ENCODE measurements at regions of chr6 and their contacts with region 1.

Region 1: DNA sequence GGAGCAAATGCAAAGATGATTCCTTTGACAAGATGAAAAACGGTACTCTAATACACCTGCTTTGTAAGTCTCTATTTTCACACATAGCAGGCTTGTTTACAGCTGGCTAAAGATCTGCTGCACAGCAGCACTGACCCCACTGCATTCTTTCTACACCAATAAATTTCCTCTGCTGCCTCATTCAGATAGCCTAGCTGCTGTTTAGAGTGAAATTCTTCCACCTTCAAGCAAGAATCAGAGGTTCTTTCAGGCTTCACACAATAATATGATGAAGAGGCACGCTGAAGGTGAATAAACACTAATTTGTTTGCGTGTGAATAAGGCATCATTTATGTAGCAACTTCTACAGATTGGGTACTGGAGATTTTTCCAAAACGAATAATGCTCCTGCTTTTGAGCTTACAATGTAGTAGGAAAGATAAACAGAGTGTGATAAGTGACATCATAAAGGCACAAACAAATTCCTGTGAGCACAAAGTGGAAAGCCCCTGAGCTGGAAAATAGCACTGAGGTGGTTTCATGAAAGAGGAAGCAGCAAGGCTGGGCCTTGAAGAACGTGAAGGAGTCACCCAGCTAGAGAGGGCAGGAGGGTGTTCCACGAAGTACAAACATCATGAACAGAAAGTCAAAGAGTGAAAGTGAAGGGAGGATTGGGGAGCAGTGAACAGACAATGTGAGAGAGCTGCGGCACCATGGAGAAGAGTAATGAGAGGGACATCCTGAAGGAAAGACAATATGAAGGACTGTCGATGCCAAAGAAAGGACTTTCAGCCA is 543.4 kb downstream of the CD83 start:
- DNase-seq: peak; percentile 91
- H3K4me3 Mint-ChIP-seq: no peak overlapping the region
- H3K27ac Mint-ChIP-seq: no peak overlapping the region
- H3K4me1 Mint-ChIP-seq: peaks cover 46% of the 10 kb centered on the region
- H3K27me3 Mint-ChIP-seq: peaks cover 7% of the 10 kb centered on the region

Region 2: DNA sequence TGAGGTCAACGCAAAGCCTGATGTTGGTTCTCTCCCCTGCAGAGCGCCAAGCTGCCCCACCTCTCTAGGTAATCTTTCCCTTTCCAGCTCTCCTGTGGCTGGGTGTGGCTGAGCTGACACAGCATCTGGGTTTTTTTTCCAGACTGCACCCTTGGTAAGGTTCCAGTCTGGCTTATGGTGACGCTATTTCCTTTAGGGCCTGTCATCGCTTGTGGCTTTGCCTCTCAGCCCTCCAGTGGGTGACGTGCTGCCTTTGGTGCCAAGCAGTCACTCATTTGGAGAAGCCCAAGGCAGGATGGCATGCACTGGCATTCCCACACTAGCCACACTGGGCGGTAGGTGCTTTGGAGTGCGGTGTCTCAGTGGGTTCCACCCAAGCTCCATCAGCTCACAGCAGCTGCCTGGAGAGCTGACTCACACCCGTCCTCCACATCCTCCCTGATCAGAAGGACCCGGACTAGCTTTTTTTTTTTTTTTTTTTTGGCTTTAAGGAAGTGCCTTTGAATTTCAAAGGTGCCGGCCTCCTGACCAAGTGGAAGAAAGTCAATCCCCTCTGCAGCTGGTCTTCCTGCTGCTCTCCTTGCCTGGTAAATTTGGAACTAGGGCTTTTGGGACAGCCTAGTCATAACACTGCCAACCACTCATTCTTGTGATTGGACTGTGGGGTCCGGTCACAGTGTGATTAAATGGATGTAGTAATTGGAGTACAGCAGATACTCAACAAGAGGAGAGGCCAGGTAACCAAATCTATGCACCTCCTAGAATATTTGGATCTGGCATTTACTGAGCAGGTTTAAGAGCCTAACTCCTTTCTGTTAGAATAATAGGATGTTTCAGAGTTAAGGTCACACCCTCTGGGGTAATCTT is 389.8 kb before region 1 on chr6:
- intact Hi-C with region 1: loop called (anchors 5 kb)
- DNase-seq: peak; percentile 90
- H3K4me3 Mint-ChIP-seq: peak overlapping the region; percentile 30
- H3K27ac Mint-ChIP-seq: peak overlapping the region; percentile 80
- H3K4me1 Mint-ChIP-seq: peaks cover 44% of the 10 kb centered on the region
- H3K27me3 Mint-ChIP-seq: no peaks in the 10 kb centered on the region

Region 3: GRCh38 chr6:14638906-14639761 is 21.9 kb before region 1 on chr6:
- intact Hi-C with region 1: loop called (anchors 1 kb)
- DNase-seq: no peak
- H3K4me3 Mint-ChIP-seq: no peak overlapping the region
- H3K27ac Mint-ChIP-seq: peak overlapping the region; percentile 52
- H3K4me1 Mint-ChIP-seq: peaks cover 58% of the 10 kb centered on the region
- H3K27me3 Mint-ChIP-seq: peaks cover 4% of the 10 kb centered on the region

Region 4: GRCh38 chr6:14711056-14711703 is 50.2 kb after region 1 on chr6:
- intact Hi-C with region 1: loop called (anchors 1 kb)
- DNase-seq: peak; percentile 90
- H3K4me3 Mint-ChIP-seq: peak overlapping the region; percentile 24
- H3K27ac Mint-ChIP-seq: peak overlapping the region; percentile 95
- H3K4me1 Mint-ChIP-seq: peaks cover 42% of the 10 kb centered on the region
- H3K27me3 Mint-ChIP-seq: no peaks in the 10 kb centered on the region

Region 5: DNA sequence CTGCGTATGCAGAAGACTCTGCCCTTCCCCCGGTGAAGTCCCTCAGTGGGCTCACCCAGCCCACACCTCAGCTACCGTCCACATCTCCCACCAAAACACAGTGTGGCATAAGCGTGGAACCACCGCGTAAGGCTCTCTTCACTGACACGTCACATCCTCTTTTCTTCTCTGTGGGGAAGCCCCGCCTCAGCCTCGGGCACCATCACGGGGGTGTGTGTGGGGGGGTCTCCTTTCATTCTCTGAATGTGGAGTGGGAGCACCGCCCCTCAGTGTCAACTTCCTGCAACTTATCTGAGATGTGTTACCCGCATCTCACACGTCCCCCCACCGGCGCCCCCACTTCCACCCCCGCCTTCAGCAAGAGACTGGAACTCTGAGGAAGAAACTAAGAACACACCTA is 196.5 kb after region 1 on chr6:
- intact Hi-C with region 1: loop called (anchors 5 kb)
- DNase-seq: peak; percentile 82
- H3K4me3 Mint-ChIP-seq: peak overlapping the region; percentile 71
- H3K27ac Mint-ChIP-seq: peak overlapping the region; percentile 98
- H3K4me1 Mint-ChIP-seq: peaks cover 35% of the 10 kb centered on the region
- H3K27me3 Mint-ChIP-seq: no peaks in the 10 kb centered on the region

Measured in activated CD4-positive, alpha-beta T cell treated with anti-CD3 and anti-CD28 coated beads, Interleukin-2, amount 10 ng/mL, durations not matched to agents 24 days and 14 days (primary cell).